ENCODE measurements at regions of chr15 and their contacts with region 1.

Region 1: GRCh38 chr15:41811432-41812195 is 16.3 kb upstream of the JMJD7 start:
- DNase-seq: peak; percentile 68 to 75 (median 70)
- H3K4me3 ChIP-seq: no peak overlapping the region
- H3K4me3 Mint-ChIP-seq: peak overlapping the region in 1 of 8 donors; percentile 1
- H3K27ac ChIP-seq: no peak overlapping the region
- H3K27ac Mint-ChIP-seq: peak overlapping the region in 4 of 7 donors; percentile 29 to 57 (median 37)
- H3K4me1 ChIP-seq: peaks cover 12% of the 10 kb centered on the region
- H3K4me1 Mint-ChIP-seq: peaks cover 7 to 21% (median 13%) of the 10 kb centered on the region in 4 donors
- H3K27me3 ChIP-seq: no peaks in the 10 kb centered on the region
- H3K27me3 Mint-ChIP-seq: no peaks in the 10 kb centered on the region

Region 2: GRCh38 chr15:41465822-41466421 is 345.7 kb before region 1 on chr15:
- CTCF ChIA-PET with region 1: interaction called, 9 read pairs
- POLR2A ChIA-PET with region 1: no interaction called
- intact Hi-C with region 1: loop called (anchors 1 kb)
- DNase-seq: peak in 4 of 5 donors; percentile 37 to 56 (median 44)
- H3K4me3 ChIP-seq: no peak overlapping the region
- H3K4me3 Mint-ChIP-seq: no peak overlapping the region
- H3K27ac ChIP-seq: no peak overlapping the region
- H3K27ac Mint-ChIP-seq: peak overlapping the region in 3 of 7 donors; percentile 24 to 89 (median 49)
- H3K4me1 ChIP-seq: no peaks in the 10 kb centered on the region
- H3K4me1 Mint-ChIP-seq: peaks cover 0 to 7% (median 4%) of the 10 kb centered on the region in 4 donors
- H3K27me3 ChIP-seq: no peaks in the 10 kb centered on the region
- H3K27me3 Mint-ChIP-seq: no peaks in the 10 kb centered on the region

Region 3: DNA sequence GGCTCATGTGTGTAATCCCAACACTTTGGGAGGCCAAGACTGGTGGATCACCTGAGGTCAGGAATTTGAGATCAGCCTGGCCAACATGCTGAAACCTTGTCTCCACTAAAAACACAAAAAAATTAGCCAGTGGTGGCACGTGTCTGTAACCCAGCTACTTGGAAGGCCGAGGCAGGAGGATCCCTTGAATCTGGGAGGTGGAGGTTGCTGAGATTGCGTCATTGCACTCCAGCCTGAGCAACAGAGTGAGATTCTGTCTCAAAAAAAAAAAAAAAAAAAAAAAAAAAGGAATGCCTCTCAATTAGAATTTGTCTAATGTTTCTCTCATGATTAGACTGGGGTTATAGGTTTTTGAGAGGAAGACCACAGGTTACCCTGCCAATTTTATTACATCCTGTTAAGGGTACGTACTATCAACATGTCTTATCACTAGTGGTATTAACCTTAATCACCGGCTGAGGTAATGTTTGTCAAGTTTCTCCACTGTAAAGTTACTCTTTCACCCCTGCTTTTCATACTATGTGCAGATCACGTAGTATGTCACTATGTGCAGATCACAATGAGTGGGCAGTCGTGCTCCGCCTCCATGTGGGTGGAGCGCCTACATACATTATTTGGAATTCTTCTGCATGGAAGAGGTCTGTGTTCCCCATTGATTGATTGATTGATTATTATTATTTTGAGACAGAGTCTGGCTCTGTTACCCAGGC is 261.4 kb before region 1 on chr15:
- CTCF ChIA-PET with region 1: no interaction called
- POLR2A ChIA-PET with region 1: no interaction called
- intact Hi-C with region 1: no loop called
- DNase-seq: no peak
- H3K4me3 ChIP-seq: no peak overlapping the region
- H3K4me3 Mint-ChIP-seq: peak overlapping the region in 1 of 8 donors; percentile 41
- H3K27ac ChIP-seq: no peak overlapping the region
- H3K27ac Mint-ChIP-seq: no peak overlapping the region
- H3K4me1 ChIP-seq: no peaks in the 10 kb centered on the region
- H3K4me1 Mint-ChIP-seq: peaks cover 0 to 11% (median 8%) of the 10 kb centered on the region in 4 donors
- H3K27me3 ChIP-seq: no peaks in the 10 kb centered on the region
- H3K27me3 Mint-ChIP-seq: no peaks in the 10 kb centered on the region

Region 4: DNA sequence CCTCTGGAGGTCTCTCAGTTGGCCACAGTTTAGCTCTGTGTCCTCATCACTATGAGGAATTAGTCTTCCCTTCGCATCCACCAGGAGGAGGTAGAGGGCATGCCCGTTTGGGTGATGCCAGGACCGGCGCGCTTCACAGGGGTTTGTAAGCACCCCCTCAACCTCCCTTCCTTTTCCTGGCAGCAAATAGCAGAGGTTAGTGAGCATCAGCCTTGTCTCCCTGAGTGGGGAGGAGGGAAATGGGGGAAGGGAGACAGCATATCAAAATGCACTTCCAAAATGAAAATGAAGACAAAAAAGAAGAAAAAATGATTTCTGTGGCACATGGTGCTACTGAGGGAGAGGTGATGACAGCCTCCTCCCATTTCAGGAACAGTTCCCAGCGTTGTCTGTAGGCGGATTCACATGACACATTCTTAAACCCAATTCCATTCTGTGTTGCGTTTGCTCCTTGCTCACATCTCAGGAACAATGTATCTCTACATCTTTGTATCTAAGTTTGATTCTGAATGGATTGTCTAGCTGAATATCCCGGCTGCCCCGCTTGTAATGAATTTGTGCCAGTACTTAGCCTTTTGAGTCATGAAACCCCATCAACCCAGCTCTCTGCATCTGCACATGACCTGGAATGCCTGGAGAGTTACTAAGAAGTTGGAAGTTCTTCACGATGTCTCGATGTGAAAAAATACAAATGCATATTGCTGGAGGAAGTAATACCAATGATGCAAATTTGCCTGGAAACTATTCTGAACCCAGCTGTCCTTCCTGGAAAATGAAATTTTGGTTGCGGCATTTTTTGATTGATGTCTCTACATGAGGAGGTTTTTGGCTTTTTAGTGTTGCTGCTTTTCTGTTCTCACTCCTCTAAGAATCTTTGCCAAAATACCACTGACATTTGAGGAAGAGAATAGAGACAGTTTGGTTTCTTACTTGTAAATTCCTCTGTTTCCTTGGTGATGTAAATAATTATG is 207.4 kb before region 1 on chr15:
- CTCF ChIA-PET with region 1: interaction called, 29 read pairs
- POLR2A ChIA-PET with region 1: no interaction called
- intact Hi-C with region 1: loop called (anchors 1 kb)
- DNase-seq: peak; percentile 53 to 58 (median 53)
- H3K4me3 ChIP-seq: peak overlapping the region in 1 of 2 donors; percentile 36
- H3K4me3 Mint-ChIP-seq: peak overlapping the region; percentile 49 to 87 (median 78)
- H3K27ac ChIP-seq: no peak overlapping the region
- H3K27ac Mint-ChIP-seq: peak overlapping the region in 1 of 7 donors; percentile 68
- H3K4me1 ChIP-seq: peaks cover 6% of the 10 kb centered on the region
- H3K4me1 Mint-ChIP-seq: peaks cover 8 to 10% (median 9%) of the 10 kb centered on the region in 4 donors
- H3K27me3 ChIP-seq: peaks cover 3% of the 10 kb centered on the region
- H3K27me3 Mint-ChIP-seq: peaks cover 13 to 15% of the 10 kb centered on the region in 2 donors

Region 5: GRCh38 chr15:41695750-41696426 is 115.7 kb before region 1 on chr15:
- CTCF ChIA-PET with region 1: interaction called, 12 read pairs
- POLR2A ChIA-PET with region 1: interaction called, 4 read pairs
- intact Hi-C with region 1: loop called (anchors 1 kb)
- DNase-seq: peak; percentile 45 to 67 (median 52)
- H3K4me3 ChIP-seq: no peak overlapping the region
- H3K4me3 Mint-ChIP-seq: peak overlapping the region; percentile 2 to 73 (median 54)
- H3K27ac ChIP-seq: peak overlapping the region; percentile 11
- H3K27ac Mint-ChIP-seq: peak overlapping the region; percentile 6 to 92 (median 77)
- H3K4me1 ChIP-seq: peaks cover 23% of the 10 kb centered on the region
- H3K4me1 Mint-ChIP-seq: peaks cover 34 to 54% (median 44%) of the 10 kb centered on the region in 4 donors
- H3K27me3 ChIP-seq: no peaks in the 10 kb centered on the region
- H3K27me3 Mint-ChIP-seq: no peaks in the 10 kb centered on the region

Region 6: DNA sequence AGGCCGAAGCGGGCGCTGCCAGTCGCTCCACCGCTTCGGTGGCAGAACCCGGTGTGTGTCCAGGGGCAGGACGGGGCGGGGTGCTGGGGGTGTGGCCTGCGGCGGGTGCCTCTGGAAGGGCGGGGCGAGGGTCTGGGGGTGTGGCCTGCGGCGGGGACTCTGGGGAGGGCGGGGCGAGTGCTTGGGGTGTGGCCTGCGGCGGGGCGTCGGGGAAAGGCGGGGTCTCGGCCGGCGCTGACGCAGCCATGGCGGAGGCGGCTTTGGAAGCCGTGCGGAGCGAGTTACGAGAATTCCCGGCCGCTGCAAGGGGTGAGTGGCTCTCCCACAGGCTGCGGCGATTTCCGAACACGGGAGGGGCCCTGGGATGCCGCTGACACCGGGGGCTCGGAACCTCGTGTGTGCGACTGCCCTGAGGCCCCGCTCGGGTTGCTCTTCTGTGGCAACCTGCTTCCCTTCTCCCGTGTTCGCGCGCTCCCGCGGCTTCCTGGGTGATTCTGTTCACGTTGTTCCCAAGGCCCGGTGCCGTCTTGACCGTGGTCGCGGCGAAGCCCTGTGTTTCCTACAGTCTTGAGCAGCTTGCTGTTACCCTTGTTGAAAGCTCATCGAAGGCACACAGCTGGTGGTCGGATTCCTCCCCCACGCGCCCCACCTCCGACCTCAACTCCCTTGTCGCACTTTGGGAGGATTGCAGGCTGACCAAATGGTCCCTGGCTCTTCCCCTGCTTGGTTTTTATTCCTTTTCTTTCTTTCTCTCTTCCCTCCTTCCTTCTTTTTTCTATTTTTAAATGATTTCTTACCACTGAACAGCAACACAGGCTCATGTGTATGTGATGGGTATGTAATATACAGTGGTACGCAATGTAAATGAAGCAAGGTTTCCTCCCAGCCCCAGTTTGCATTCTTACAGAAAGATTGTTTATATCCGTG is 16.5 kb after region 1 on chr15 and contains the start of gene JMJD7:
- CTCF ChIA-PET with region 1: interaction called, 12 read pairs
- POLR2A ChIA-PET with region 1: no interaction called
- intact Hi-C with region 1: no loop called
- DNase-seq: peak; percentile 88 to 92 (median 89)
- H3K4me3 ChIP-seq: peak within 1 kb of the TSS; percentile 94 to 95
- H3K4me3 Mint-ChIP-seq: peak within 1 kb of the TSS; percentile 91 to 99 (median 94)
- H3K27ac ChIP-seq: peak within 1 kb of the TSS; percentile 74
- H3K27ac Mint-ChIP-seq: peak within 1 kb of the TSS; percentile 83 to 98 (median 95)
- H3K4me1 ChIP-seq: peaks cover 48% of the 10 kb centered on the region
- H3K4me1 Mint-ChIP-seq: peaks cover 30 to 54% (median 43%) of the 10 kb centered on the region in 4 donors
- H3K27me3 ChIP-seq: no peaks in the 10 kb centered on the region
- H3K27me3 Mint-ChIP-seq: no peaks in the 10 kb centered on the region
- total RNA-seq, gene JMJD7: 75.0 to 78.5 TPM

Region 7: DNA sequence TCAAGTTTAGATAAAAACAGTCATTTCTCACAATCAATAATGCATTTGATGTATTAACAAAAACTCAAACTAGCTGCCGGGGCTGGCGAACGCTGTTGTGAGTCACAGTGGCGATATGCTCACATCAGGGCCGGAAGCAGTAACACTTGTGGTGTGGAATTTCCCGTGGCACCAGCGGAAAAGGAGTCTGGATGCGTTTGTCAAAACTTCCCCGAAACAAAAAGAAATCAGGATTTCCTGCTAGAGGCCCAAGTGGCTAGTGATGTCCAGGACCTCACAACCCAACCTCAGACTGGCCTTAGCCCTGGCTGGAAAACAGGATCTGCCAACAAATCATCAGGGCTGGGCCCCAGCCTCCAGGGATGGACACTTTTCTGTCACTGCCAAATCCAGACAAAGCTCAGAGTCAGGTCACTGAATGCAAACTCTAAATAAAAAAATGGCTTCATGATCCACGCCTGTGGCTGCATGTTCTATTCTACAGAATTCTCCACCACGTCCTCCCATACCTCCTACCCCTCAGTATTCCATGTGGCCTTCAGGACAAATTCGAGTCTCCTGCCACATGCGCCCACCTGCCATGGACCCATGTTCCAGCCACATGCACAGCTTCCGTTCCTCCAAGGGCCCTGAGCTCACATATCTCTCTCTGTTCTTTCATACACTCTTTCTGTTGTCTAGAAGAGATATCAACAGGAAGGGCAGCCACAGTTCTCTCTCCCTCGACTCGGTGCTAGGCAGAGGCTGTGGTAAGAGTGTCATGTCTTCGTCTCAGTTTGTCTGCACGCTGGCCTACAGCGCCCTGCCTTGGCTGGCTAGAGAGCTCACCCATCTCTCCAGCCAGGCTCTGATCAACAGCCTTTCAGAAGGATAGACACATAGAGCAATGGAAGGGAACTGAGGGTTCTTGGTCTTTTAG is 125.3 kb after region 1 on chr15:
- CTCF ChIA-PET with region 1: interaction called, 18 read pairs
- POLR2A ChIA-PET with region 1: interaction called, 3 read pairs
- intact Hi-C with region 1: no loop called
- DNase-seq: peak; percentile 80 to 95 (median 81)
- H3K4me3 ChIP-seq: peak overlapping the region in 1 of 2 donors; percentile 12
- H3K4me3 Mint-ChIP-seq: peak overlapping the region; percentile 77 to 95 (median 89)
- H3K27ac ChIP-seq: peak overlapping the region; percentile 97
- H3K27ac Mint-ChIP-seq: peak overlapping the region; percentile 94 to 100 (median 100)
- H3K4me1 ChIP-seq: peaks cover 75% of the 10 kb centered on the region
- H3K4me1 Mint-ChIP-seq: peaks cover 46 to 76% (median 67%) of the 10 kb centered on the region in 4 donors
- H3K27me3 ChIP-seq: no peaks in the 10 kb centered on the region
- H3K27me3 Mint-ChIP-seq: no peaks in the 10 kb centered on the region

Measured in CD4-positive, alpha-beta memory T cell (primary cell).